Dorsolateral prefrontal cortex (tissue), 120 donors: ENCODE measurements at regions of chrX and their contacts with region 1.

Region 1: GRCh38 chrX:54439967-54440871 is at the start of gene TSR2:
- DNase-seq: peak; percentile 68 to 88 (median 84)
- H3K4me3 ChIP-seq: peak within 1 kb of the TSS; percentile 45 to 93 (median 78)
- H3K27ac ChIP-seq: peak within 1 kb of the TSS in 39 of 59 donors; percentile 14 to 82 (median 57)
- H3K27me3 ChIP-seq: peaks cover 0 to 46% (median 5%) of the 10 kb centered on the region in 45 donors
- CTCF ChIP-seq: peak in 15 of 56 donors; percentile 3 to 35 (median 16)
- total RNA-seq, gene TSR2: 58.9 to 122 (median 92.9) TPM

Region 2: DNA sequence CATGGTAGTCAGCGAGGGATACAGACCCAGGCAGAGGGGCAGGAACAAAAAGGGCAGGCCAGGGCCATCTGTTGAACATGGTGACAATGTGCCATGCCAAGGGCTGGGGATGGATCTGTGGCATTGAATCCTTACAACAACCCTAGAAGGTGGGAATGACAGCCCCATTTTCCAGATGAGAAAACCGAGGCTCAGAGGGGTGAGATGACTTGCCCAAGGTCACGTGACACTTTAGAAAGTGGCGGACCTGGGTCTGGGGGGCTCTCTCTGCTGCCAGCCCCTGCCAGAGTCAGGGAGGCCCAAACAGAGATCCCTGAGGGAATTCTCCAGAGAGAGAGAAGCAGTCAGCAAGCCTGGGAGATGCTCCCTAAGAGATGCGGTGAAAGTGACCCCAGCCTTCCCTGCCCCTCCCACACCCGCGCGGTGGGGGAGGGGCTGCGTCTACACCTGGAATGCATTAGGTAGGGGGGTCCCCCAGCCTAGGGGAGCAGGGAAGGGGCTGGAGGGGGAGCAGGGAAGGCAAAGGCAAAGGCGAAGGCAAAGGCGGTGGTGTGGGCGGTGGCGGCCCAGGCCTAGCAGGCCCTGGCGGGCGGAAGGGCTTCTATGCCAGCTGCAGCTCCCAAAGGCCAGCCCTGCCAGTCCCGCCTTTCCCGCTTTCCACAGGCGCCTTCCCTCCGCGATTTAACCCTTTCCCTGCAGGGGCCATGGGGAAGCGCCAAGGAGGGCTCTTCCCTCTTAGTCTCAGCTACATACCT is 42.8 kb after region 1 on chrX:
- intact Hi-C with region 1: no loop called
- DNase-seq: no peak
- H3K4me3 ChIP-seq: peak overlapping the region in 18 of 59 donors; percentile 3 to 40 (median 18)
- H3K27ac ChIP-seq: peak overlapping the region in 8 of 59 donors; percentile 6 to 51 (median 21)
- H3K27me3 ChIP-seq: peaks cover 0 to 67% (median 9%) of the 10 kb centered on the region in 45 donors
- CTCF ChIP-seq: no peak

Region 3: DNA sequence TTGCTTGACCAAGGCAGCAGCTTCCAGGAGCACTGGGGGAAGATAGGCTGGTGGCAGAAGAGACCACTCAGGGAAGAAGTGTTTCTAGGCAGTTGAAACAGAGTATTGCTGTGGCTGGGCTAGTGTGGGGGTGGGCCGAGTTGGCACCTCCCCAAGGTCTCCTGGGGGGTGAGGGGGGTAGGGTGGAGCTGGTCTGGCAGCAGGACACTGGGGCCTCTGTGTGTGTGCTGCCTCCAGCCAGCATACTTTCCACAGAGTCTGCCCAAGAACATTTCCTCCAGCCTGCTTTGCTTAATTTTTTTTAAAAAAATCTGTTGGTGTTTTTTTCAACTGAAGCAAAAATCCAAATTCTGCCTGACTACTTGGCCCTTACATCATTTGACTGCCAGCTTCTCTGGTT is 353.8 kb after region 1 on chrX:
- intact Hi-C with region 1: no loop called
- DNase-seq: no peak
- H3K4me3 ChIP-seq: no peak overlapping the region
- H3K27ac ChIP-seq: no peak overlapping the region
- H3K27me3 ChIP-seq: peaks cover 0 to 66% (median 6%) of the 10 kb centered on the region in 45 donors
- CTCF ChIP-seq: no peak

Region 4: DNA sequence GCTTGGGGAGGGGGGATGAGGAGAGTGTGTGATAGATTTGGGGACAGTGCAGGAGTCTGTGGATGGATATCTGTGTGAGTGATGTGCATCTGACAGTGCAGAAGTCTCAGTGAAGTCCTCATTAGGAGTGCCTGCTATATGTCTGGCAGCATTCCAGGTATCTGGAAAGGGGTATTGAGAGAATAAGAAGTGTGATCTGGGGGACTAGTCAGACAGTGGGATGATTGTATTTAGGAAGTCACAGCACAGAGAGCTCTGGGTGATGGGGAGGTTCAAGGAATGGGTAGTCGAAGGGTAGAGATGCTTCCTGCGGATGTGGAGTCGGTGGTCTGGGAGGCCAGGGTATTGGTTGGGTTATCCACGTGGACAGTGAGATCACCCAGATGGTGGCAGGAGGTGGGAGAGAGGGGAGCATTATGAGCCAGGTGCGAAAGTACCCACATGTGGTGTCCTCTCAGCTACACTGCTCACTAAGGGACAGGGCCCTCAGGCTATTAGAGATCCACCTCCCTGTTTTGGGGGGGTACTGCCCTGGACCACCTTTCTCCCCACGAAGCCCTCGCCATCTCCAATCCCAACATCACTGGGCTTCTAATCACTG is 377.1 kb after region 1 on chrX:
- intact Hi-C with region 1: loop called in 1 of 2 experiments (anchors 10 kb)
- DNase-seq: no peak
- H3K4me3 ChIP-seq: no peak overlapping the region
- H3K27ac ChIP-seq: no peak overlapping the region
- H3K27me3 ChIP-seq: peaks cover 0 to 51% (median 6%) of the 10 kb centered on the region in 45 donors
- CTCF ChIP-seq: no peak